Right ventricle myocardium inferior (tissue), 1 donor: ENCODE measurements at regions of chr4 and their contacts with region 1.

Region 1: GRCh38 chr4:2761035-2761923 is 5.1 kb upstream of the TNIP2 start:
- DNase-seq: no peak
- ATAC-seq: no peak

Region 2: DNA sequence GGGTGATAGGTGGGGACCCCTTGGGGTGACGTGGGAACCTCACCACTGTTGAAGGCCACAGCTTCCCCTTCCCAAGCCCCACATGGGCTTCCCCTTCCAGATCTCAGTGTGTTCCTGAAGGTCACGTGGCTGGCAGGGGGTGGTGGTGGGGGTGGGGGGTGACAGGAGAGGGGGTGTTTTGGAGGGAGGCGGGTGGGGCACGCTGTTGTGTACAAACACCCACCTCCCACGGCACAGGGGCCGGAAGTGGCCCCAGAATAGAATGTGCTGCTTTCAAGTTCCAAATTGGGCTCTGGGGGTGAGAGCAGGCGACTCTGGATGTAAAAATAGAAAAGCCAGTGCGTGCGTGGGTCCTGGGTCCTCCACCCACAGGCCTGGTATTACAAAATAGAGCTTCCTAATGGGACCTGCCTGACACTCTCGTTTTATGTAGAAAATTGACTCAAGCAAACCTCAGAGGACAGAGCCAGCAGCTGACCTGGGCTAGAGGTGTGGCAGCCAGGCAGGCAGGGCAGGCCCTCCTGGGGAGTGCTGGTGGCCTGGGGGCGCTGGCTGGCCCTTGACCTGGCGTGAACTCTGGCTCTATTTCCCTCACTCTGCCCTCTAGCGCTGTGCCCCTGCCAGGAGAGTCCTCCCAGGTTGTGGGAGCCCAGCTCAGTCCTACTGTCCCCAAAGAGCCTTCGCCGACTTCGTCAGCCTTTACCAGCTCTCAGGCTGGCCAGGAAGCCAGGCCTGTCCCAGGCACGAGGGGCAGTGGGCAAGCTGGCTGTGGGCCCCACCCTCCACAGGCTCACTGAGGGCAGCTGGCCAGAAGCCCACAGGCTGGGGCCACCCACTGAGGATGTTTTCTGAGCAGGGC is 26.2 kb after region 1 on chr4:
- intact Hi-C with region 1: no loop called
- DNase-seq: peak; percentile 80
- ATAC-seq: peak; percentile 51

Region 3: DNA sequence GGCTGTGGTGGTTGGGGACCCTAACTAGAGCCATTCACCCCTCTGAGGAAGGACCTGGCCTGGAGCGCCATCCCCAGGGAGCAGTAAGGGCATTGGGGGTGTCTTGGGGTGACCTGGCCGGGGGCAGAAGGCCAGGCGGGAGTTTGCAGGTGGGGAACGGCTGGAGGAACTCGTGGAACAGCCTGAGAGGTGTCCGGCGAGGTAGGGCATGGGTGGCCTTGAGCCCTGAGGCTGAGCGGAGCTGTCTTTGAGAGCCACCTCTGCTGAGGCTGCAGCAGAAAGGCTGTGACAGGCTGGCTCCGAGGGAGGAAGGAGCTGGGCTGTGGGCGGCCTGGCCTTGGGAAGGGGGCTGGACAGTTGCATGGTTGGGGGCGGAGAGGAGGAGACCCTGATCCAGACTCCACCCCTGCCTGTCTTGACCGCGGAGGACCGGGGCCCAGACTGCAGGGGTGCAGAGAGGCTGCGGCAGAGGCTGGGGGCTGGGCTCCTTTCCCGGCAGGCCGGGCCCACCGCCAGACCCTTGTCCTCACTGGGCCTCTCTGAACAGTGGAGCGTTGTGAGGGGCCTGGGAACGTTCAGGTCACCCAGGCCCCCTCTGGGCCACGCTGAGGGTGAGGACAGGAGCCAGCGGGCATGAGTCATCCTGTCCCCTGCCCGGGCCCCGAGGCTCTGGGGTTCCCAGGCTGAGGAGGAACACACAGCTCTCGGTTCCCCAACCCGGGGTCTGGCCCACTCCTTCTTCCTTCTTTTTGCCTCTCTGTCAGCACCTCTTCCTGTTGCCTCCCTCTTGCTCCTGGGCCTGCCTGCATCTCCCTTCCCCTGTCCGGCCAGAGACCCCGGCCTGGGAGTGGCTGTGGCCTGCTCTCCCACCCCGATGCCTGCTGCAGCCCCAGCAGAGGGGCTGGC is 39.7 kb after region 1 on chr4:
- intact Hi-C with region 1: loop called (anchors 5 kb)
- DNase-seq: peak; percentile 95
- ATAC-seq: peak; percentile 85

Region 4: DNA sequence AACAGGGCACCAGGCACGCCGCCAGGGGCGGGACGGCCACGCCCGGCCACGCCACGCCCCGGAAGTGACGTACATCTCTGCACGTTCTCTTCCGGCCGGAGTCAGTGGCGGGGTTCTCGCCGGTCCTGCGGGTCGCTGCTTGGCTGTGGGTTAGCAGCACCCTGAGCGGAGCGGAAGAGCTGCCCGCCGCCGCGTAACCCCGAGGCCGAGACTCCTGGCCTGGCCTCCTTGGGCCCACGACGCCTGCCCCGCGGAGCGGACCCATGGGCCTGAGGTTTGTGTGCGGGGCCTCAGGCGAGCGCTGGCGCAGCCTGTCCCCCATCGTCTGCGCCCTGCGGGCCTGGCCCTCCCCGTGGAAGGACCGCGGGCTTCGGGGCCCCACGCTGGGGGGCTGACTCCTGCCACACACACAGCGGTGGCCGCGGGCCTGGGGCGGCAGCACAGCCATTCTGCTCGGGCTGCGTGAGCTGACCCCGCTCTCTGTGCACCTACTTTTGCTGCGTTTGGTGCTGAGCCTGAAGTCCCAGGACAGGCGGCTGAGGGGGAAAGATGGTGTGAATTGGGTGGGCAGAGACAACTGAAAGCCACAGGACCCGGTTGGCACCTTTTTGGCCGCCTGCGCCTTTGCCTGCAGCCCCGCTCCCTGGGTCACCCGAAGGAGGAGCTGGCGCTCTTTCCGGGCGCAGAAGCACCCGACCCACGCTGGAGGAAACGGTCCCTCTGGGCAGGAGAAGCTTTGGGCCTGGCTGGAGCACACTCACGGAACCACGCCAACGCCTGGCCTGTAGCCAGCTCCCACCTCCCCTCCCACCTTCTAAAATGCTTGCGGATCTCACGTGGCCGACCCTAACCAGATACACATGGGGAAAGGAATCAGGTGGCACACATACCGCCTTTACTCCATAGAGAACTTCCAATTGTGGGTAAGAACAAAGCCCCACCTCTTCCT is 173.8 kb after region 1 on chr4:
- intact Hi-C with region 1: loop called (anchors 5 kb)
- DNase-seq: peak; percentile 96
- ATAC-seq: peak; percentile 80

Region 5: DNA sequence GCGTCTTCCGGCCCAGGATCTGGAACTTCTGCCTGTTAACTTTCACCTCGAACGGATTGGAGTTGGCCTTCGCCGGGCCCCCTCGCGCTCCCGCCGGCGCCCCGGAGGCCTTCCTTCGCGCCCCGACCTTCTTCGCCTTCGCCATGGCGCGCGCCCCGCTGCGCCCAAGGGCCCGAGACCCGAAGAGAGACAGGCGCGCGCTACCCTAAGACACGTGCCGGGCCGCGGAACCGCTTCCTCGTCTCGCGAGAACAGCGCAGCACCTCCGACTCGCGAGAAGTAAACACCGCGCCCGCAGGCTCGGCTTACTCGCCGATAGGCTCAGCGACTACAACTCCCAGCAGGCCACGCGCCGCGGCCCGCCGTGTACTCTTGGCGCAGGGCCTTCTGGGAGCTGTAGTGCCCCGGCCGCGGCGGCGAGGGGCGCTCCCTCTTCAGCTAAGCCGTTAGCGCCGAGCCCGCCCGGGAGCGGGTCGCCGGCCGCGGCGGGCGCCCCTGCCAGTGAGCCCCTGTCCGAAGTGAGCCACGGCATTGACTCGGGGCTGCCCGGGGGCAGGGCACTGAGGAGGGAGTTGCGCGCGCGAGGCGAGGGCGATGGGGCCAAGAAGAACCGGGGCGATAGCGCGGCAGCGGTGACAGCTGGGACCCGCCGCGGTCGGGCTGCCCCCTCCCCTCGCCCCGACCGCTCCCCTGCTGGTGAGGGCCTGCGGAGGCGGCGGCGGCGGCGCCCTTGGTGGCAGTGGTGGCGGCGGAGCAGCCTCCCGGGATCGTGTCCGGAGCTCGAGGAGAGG is 202.1 kb after region 1 on chr4 and contains the starts of genes GRK4 and NOP14:
- intact Hi-C with region 1: loop called (anchors 5 kb)
- DNase-seq: peak; percentile 100
- ATAC-seq: peak; percentile 98
- total RNA-seq, gene GRK4: 7.7 TPM
- total RNA-seq, gene NOP14: 18.3 TPM

Region 6: DNA sequence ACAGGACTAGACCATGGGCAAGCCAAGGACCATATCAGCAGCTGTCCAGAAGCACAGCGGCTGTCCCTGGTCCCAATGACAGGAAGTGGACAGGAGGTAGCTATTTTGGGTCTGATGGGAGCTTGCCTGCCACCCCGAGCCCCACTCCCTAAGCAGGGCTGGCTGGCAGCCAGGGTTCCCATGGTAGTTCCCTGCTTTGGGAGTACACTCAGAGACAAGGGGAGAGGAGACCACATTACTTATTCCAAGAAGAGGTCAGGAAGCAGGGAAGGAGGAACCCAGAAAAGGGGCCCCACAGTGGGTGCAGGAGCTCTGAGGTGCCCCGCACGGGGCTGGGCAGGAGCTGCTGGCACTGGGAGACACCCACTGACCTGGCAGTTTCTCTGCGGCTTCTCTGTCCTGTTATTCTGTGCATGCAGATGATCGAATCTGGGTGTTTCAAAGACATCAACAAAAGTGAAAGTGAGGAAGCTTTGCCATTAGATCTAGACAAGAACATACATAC is 276.7 kb after region 1 on chr4:
- intact Hi-C with region 1: loop called (anchors 5 kb)
- DNase-seq: peak; percentile 82
- ATAC-seq: peak; percentile 58